ENCODE measurements at regions of chr17 and their contacts with region 1.

Region 1: DNA sequence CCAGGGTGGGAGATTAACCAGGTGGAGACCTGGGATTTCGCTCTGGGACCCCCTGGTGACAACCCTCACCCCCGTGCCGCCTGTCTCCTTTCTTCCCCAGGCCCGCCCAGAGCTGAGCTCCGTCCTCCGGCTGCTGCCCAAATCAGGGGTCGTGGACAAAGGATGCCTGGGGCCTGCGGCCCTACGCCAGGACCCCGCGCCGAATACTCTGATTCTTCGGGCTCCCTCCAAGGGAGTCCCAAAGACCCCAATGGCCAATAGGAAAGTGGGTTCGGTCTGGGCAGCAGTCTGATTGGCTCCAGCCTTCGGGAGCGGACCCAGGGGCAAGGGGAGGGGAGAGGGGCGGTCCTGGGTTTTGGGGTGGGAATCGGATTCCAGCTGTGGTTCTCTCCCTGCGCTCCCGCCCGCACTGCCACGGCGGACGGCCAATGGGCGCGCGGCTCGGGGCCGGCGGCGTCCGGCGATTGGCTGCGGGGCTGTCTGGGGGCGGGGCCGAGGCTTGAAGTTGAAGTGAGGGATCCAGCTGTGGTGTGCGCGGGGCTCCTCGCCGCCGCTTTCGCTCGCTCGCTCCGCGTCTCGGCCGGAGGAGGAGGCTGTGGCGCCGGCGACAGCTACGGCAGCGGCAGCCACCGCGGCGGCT is at the start of gene CACNA1G:
- DNase-seq: peak; percentile 63 to 87
- H3K4me3 ChIP-seq: peak within 1 kb of the TSS; percentile 44
- H3K27ac ChIP-seq: no peak within 1 kb of the TSS
- H3K4me1 ChIP-seq: peaks cover 7% of the 10 kb centered on the region
- H3K27me3 ChIP-seq: peaks cover 21% of the 10 kb centered on the region
- CTCF ChIP-seq: no peak
- total RNA-seq, gene CACNA1G: 0.28 and 0.46 TPM in 2 replicates

Region 2: DNA sequence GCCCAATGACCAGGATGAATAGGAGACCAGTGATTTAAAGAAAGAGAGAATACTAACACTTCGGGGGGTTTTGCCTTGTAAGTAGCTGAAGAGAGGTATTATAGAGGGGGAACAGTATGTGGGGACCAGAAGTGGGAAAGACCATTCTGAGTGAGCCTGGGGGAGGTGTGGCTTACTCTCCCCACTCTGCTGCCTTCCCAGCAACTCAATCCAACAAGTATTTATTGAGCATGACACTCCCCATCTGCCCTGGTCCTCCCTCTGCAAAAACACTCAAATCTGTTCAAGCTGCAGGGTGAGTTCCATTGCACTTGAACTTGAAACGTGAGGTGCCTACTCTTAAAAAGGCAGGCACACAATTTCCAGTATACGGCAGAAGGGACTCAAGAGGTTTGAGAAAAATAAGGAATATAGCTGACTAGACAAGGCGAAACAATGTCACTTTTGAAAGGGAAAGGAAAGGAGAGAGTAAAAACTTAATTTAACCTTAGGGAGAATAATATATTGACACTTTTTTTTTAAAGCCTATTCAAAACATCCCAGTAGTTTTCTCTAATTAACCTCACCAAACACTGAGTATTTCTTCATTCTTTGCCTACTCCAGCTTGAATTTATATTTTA is 804.5 kb before region 1 on chr17:
- CTCF ChIA-PET with region 1: no interaction called
- POLR2A ChIA-PET with region 1: interaction called, 10 read pairs
- intact Hi-C with region 1: no loop called
- DNase-seq: no peak
- H3K4me3 ChIP-seq: no peak overlapping the region
- H3K27ac ChIP-seq: no peak overlapping the region
- H3K4me1 ChIP-seq: no peaks in the 10 kb centered on the region
- H3K27me3 ChIP-seq: no peaks in the 10 kb centered on the region
- CTCF ChIP-seq: no peak

Region 3: GRCh38 chr17:50087246-50087911 is 472.9 kb before region 1 on chr17:
- CTCF ChIA-PET with region 1: no interaction called
- POLR2A ChIA-PET with region 1: no interaction called
- intact Hi-C with region 1: no loop called
- DNase-seq: peak; percentile 68 to 72
- H3K4me3 ChIP-seq: no peak overlapping the region
- H3K27ac ChIP-seq: no peak overlapping the region
- H3K4me1 ChIP-seq: no peaks in the 10 kb centered on the region
- H3K27me3 ChIP-seq: no peaks in the 10 kb centered on the region
- CTCF ChIP-seq: peak; percentile 97

Measured in PC-9 (cell line).